SK-N-SH (cell line): ENCODE measurements at regions of chr1 and their contacts with region 1.

Region 1: DNA sequence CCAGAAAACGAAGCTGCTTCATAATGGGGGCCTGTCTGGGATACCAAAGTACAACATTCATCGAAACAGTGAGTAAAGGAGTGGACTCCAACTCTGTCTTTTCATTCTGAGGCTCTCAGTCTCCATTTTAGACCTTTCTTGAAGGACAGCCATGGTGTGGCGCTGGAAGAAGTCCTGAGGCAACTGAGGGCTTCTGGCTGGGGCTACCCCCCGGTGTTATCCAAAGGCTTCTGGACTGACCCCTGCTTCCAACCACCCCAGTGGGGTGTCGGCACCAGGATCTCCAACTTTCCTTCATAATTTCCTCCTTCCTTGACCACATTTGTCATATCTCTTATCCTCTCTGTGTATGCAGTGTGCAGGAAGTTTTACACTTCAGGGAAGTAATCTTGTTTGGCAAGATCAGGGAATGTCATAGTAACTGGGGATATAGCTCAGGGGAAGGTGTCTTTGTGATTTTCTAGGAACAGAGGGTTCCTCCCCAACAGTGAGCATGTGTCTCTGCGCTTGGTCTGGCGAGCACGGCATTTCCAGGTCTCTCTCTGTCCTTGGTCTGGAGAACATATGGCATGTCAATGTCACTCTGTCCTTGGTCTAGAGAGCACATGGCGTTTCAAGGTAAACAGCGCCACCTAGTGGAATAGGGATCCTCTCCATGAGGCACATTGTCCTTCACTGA is 19.4 kb upstream of the BSDC1 start:
- DNase-seq: peak; percentile 66
- H3K4me3 ChIP-seq: no peak overlapping the region; a peak in 1 of 4 replicates
- H3K27ac ChIP-seq: no peak overlapping the region
- H3K4me1 ChIP-seq: peaks cover 0 to 4% of the 10 kb centered on the region in 2 experiments; a peak in 1 of 4 replicates
- H3K27me3 ChIP-seq: no peaks in the 10 kb centered on the region; the same call in none of the 2 replicates
- CTCF ChIP-seq: peak; percentile 82
- EP300 ChIP-seq: no peak
- RAD21 ChIP-seq: peak; percentile 89

Region 2: GRCh38 chr1:32400876-32401631 is 12.6 kb before region 1 on chr1:
- CTCF ChIA-PET with region 1: interaction called, 76 read pairs
- POLR2A ChIA-PET with region 1: no interaction called
- DNase-seq: peak; percentile 87
- H3K4me3 ChIP-seq: peak overlapping the region in 1 of 2 experiments; percentile 7; a peak in 1 of 4 replicates
- H3K27ac ChIP-seq: no peak overlapping the region
- H3K4me1 ChIP-seq: no peaks in the 10 kb centered on the region; a peak in 1 of 4 replicates
- H3K27me3 ChIP-seq: no peaks in the 10 kb centered on the region
- CTCF ChIP-seq: peak; percentile 92
- EP300 ChIP-seq: no peak
- RAD21 ChIP-seq: peak; percentile 95